Right ventricle myocardium inferior (tissue), 1 donor: ENCODE measurements at regions of chr16 and their contacts with region 1.

Region 1: DNA sequence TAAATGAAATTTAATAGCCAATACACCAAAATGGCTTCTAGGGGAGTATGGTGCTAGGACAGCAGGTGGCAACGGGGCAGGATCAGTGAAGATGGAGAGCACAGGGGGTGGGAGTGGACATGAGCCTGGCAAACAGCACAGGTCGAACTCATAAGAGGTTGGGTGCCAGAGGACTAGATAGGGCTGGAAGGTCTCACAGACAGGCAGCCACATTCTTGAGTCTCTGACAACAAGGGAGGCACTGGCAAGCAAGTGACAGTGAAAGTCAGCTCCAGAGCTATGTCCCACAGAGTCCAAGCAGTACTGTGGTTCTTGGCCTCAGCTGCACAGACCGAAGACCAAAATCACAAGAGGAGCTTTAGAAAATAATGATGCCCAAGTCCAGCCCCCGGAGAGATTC is 61.2 kb downstream of the USP31 start:
- DNase-seq: no peak
- ATAC-seq: peak; percentile 93

Region 2: DNA sequence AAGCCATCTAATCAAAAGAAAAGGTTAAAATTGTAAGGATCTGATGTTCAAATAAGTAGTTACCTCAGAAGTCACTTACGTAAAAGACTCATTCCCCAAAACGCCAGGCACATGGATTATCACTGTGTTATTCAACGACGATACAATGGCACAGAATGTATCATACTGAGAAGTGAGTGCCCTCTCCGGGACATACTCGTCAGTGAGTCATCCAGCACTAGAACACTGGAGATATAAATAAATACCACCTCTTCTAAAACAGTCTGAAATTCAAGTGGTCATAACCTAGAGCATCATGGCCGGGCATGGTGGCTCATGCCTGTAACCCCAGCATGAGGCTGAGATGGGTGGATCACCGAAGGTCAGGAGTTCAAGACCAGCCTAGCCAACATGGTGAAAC is 36.3 kb after region 1 on chr16:
- intact Hi-C with region 1: loop called (anchors 5 kb)
- DNase-seq: no peak
- ATAC-seq: peak; percentile 94